Mammary epithelial cell (primary cell): ENCODE measurements at regions of chr11 and their contacts with region 1.

Region 1: DNA sequence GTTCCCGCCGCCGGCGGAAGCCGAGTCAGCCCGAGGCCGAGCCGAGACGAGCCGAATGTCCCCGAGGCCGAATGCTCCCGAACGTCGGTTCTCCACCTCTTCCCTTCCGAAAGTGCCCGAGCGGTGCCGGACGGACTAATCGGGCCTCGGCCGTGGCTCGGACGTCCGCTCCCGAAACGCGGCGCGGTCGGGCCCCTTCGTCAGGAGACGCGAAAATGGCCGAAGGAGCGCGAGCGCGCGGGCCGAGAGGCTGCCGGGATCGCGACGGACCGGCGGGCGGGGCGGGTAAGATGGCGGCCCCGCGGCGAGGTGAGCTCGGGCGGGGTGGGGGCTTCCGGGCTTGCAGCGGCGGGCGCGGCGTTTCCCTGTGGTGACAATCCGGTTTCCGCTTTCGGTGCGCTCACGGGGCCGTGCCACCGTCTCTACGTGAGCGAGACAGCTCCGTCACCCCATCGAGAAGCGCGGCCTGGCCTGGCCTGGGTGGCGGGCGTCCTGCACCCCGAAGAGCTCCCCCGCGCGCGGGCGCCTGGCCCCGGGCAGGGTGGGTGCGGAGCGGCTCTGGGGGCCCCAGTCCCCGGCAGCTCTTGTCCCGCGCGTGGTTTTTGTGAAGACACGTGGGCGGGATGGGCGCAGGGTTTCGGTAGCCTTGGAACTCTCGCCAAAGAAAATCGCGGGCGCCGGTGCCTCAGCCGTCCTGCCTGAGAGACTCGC is at the start of gene TMEM80:
- DNase-seq: peak; percentile 97
- H3K4me3 ChIP-seq: peak within 1 kb of the TSS; percentile 61 to 76 (median 68)
- H3K27ac ChIP-seq: peak within 1 kb of the TSS; percentile 97
- H3K4me1 ChIP-seq: peaks cover 50% of the 10 kb centered on the region
- H3K27me3 ChIP-seq: no peaks in the 10 kb centered on the region
- CTCF ChIP-seq: no peak
- total RNA-seq, gene TMEM80: 10.0 to 22.5 TPM

Region 2: GRCh38 chr11:554824-555472 is 140.7 kb before region 1 on chr11:
- CTCF ChIA-PET with region 1: no interaction called
- dilution Hi-C with region 1: no loop called
- in situ Hi-C with region 1: no loop called
- intact Hi-C with region 1: loop called (anchors 10 kb)
- DNase-seq: peak; percentile 62
- H3K4me3 ChIP-seq: peak overlapping the region in 2 of 3 experiments; percentile 26 to 41
- H3K27ac ChIP-seq: no peak overlapping the region
- H3K4me1 ChIP-seq: peaks cover 9% of the 10 kb centered on the region
- H3K27me3 ChIP-seq: peaks cover 8% of the 10 kb centered on the region
- CTCF ChIP-seq: peak; percentile 36 to 64

Region 3: DNA sequence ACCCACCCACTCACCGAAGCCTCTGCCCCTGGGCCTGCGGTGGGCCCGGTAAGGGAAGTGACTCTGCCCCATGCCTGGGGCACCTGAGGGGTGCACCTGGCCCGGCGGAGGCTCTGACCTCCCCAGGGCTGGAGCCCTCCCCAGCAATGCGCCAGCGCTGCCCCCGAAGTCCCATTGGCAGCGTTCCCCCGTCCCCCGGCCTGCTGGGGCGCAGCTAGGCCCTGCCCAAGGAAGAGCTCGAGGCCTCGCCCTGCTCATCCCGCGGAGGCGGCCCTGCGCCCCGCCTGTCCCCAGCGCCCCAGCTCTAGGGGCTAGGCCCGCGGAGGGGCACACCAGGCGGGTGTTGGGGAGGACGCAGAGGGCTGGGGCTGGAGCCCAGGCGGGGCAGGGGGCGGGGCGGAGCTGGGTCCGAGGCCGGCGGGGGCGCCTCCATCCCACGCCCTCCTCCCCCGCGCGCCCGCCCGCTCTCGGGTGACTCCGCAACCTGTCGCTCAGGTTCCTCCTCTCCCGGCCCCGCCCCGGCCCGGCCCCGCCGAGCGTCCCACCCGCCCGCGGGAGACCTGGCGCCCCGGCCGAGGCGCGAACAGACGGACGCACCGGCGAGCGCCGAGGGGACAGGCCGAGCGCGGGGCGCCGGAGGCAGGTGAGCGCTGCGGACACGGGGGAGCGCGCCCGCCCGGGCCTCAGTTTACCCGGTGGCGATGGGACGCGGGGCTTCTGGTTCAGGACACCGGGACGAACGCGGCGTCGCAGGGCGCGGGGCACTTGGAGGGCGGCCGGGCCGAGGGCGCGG is 10.1 kb after region 1 on chr11 and contains the start of gene EPS8L2:
- CTCF ChIA-PET with region 1: no interaction called
- dilution Hi-C with region 1: no loop called
- in situ Hi-C with region 1: no loop called
- intact Hi-C with region 1: loop called (anchors 1 kb)
- DNase-seq: peak; percentile 56
- H3K4me3 ChIP-seq: peak within 1 kb of the TSS; percentile 58 to 95 (median 92)
- H3K27ac ChIP-seq: peak within 1 kb of the TSS; percentile 61
- H3K4me1 ChIP-seq: peaks cover 70% of the 10 kb centered on the region
- H3K27me3 ChIP-seq: no peaks in the 10 kb centered on the region
- CTCF ChIP-seq: no peak
- total RNA-seq, gene EPS8L2: 202 to 214 TPM

Region 4: GRCh38 chr11:898143-898511 is 202.4 kb after region 1 on chr11:
- CTCF ChIA-PET with region 1: no interaction called
- dilution Hi-C with region 1: no loop called
- in situ Hi-C with region 1: no loop called
- intact Hi-C with region 1: no loop called
- DNase-seq: no peak
- H3K4me3 ChIP-seq: no peak overlapping the region
- H3K27ac ChIP-seq: no peak overlapping the region
- H3K4me1 ChIP-seq: no peaks in the 10 kb centered on the region
- H3K27me3 ChIP-seq: no peaks in the 10 kb centered on the region
- CTCF ChIP-seq: peak; percentile 34 to 38